WTC11 (cell line): ENCODE measurements at regions of chr5 and their contacts with region 1.

Region 1: GRCh38 chr5:168706655-168707069 is 127.5 kb upstream of the PANK3 start:
- DNase-seq: peak; percentile 63
- ATAC-seq: peak; percentile 96
- H3K4me3 Mint-ChIP-seq: no peak overlapping the region
- H3K27ac Mint-ChIP-seq: no peak overlapping the region
- H3K4me1 Mint-ChIP-seq: no peaks in the 10 kb centered on the region
- H3K27me3 Mint-ChIP-seq: no peaks in the 10 kb centered on the region
- CTCF ChIP-seq: peak; percentile 41; the same call in 1 of the 2 replicates

Region 2: DNA sequence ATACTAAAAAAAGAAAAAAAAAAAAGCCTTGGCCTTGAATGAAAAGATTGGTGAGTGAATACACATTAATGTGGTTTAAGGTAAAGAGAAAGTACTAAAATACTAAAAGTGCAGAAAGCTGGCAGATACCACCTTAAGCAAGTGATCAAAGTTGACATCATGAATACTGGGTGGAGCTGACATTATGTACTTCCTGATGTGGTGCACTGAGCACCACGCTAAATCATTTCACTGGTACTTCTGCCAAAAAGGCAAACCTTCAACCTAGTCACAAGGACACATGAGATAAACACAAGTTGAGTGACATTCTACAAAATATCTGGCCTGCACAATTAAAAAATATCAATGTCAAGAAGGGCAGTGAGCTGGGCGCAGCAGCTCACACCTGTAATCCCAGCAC is 93.7 kb before region 1 on chr5:
- CTCF ChIA-PET with region 1: no interaction called
- POLR2A ChIA-PET with region 1: no interaction called
- DNase-seq: no peak
- ATAC-seq: no peak
- H3K4me3 Mint-ChIP-seq: no peak overlapping the region
- H3K27ac Mint-ChIP-seq: no peak overlapping the region
- H3K4me1 Mint-ChIP-seq: no peaks in the 10 kb centered on the region
- H3K27me3 Mint-ChIP-seq: peaks cover 4% of the 10 kb centered on the region; the same call in 1 of the 2 replicates
- CTCF ChIP-seq: no peak

Region 3: GRCh38 chr5:168654211-168654721 is 52.4 kb before region 1 on chr5:
- CTCF ChIA-PET with region 1: no interaction called
- POLR2A ChIA-PET with region 1: no interaction called
- DNase-seq: no peak
- ATAC-seq: no peak
- H3K4me3 Mint-ChIP-seq: no peak overlapping the region
- H3K27ac Mint-ChIP-seq: no peak overlapping the region
- H3K4me1 Mint-ChIP-seq: peaks cover 14% of the 10 kb centered on the region
- H3K27me3 Mint-ChIP-seq: no peaks in the 10 kb centered on the region
- CTCF ChIP-seq: no peak

Region 4: DNA sequence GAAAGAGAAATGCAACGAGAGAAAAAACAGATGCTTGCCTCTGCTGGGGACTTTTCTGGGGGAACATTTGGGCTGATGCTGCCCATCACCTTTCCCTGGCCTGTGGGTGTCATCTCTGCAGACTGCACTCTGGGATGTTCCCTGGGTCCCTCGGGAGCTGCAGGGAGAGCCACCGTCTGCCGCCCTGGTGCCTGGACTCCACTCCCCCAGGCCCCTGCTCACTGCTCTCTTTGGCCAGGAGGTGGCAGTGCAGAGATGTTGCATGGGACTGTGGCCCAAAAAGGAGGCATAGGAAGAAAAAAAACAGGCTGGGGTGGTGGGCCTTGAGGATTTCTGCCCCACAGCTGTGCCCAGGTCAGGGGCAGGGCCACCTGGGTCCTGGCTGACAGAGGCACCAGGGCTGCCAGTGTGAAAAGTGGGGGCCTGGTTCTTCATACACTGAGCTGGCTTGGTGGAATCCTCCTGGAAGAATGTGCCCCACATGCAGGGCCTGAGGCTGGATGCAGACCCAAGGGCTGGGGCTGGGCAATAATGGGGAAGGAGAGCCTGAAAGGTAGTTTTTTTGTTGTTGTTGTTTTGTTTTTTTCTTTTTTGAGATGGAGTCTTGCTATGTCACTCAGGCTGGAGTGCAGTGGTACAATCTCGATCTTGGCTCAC is 240.7 kb after region 1 on chr5:
- CTCF ChIA-PET with region 1: interaction called, 10 read pairs
- POLR2A ChIA-PET with region 1: no interaction called
- DNase-seq: peak; percentile 84
- ATAC-seq: peak; percentile 89
- H3K4me3 Mint-ChIP-seq: no peak overlapping the region
- H3K27ac Mint-ChIP-seq: no peak overlapping the region
- H3K4me1 Mint-ChIP-seq: peaks cover 14% of the 10 kb centered on the region
- H3K27me3 Mint-ChIP-seq: no peaks in the 10 kb centered on the region
- CTCF ChIP-seq: peak; percentile 73